Panc1 (cell line): ENCODE measurements at regions of chr1 and their contacts with region 1.

Region 1: GRCh38 chr1:172609528-172609927 is 49.4 kb upstream of the FASLG start:
- DNase-seq: no peak
- ATAC-seq: no peak; the same call in 1 of the 2 replicates
- H3K4me3 ChIP-seq: no peak overlapping the region
- H3K27ac ChIP-seq: no peak overlapping the region
- H3K4me1 ChIP-seq: no peaks in the 10 kb centered on the region
- H3K27me3 ChIP-seq: no peaks in the 10 kb centered on the region
- CTCF ChIP-seq: peak; percentile 46; the same call in 1 of the 2 replicates

Region 2: DNA sequence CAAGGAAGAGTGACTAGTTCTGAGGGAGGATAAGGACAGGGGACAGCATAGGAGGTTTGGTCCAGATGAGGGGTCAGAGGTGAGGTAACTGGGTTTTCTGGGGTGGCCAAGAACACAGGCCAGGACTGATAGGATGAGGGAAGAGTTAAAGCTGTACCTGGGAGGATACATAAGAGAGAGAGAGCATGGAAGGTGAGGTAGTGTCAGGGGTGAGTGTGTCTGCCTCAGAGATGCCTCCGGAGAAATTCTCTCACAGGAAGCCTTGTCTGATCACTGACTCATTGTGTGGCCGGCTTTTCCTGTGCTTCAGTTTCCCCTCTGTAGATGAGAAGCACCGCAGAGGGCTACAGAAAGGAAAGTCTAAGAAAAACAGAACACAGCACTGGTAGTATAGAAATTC is 89.6 kb after region 1 on chr1:
- CTCF ChIA-PET with region 1: no interaction called
- POLR2A ChIA-PET with region 1: no interaction called
- in situ Hi-C with region 1: no loop called
- intact Hi-C with region 1: no loop called
- DNase-seq: no peak
- ATAC-seq: no peak
- H3K4me3 ChIP-seq: no peak overlapping the region
- H3K27ac ChIP-seq: no peak overlapping the region
- H3K4me1 ChIP-seq: no peaks in the 10 kb centered on the region
- H3K27me3 ChIP-seq: no peaks in the 10 kb centered on the region
- CTCF ChIP-seq: no peak

Region 3: GRCh38 chr1:172719694-172720138 is 110.2 kb after region 1 on chr1:
- CTCF ChIA-PET with region 1: interaction called, 4 read pairs
- POLR2A ChIA-PET with region 1: no interaction called
- in situ Hi-C with region 1: no loop called
- intact Hi-C with region 1: loop called (anchors 5 kb)
- DNase-seq: no peak
- ATAC-seq: peak; percentile 80
- H3K4me3 ChIP-seq: no peak overlapping the region
- H3K27ac ChIP-seq: no peak overlapping the region
- H3K4me1 ChIP-seq: no peaks in the 10 kb centered on the region
- H3K27me3 ChIP-seq: peaks cover 2% of the 10 kb centered on the region
- CTCF ChIP-seq: peak; percentile 83